ENCODE measurements at regions of chr6 and their contacts with region 1.

Region 1: GRCh38 chr6:107866606-107867301 is 42.6 kb upstream of the SCML4 start:
- DNase-seq: peak; percentile 37
- ATAC-seq: peak; percentile 80
- H3K4me3 Mint-ChIP-seq: no peak overlapping the region
- H3K27ac Mint-ChIP-seq: no peak overlapping the region
- H3K4me1 Mint-ChIP-seq: peaks cover 21% of the 10 kb centered on the region
- H3K27me3 Mint-ChIP-seq: no peaks in the 10 kb centered on the region
- CTCF ChIP-seq: peak; percentile 73

Region 2: DNA sequence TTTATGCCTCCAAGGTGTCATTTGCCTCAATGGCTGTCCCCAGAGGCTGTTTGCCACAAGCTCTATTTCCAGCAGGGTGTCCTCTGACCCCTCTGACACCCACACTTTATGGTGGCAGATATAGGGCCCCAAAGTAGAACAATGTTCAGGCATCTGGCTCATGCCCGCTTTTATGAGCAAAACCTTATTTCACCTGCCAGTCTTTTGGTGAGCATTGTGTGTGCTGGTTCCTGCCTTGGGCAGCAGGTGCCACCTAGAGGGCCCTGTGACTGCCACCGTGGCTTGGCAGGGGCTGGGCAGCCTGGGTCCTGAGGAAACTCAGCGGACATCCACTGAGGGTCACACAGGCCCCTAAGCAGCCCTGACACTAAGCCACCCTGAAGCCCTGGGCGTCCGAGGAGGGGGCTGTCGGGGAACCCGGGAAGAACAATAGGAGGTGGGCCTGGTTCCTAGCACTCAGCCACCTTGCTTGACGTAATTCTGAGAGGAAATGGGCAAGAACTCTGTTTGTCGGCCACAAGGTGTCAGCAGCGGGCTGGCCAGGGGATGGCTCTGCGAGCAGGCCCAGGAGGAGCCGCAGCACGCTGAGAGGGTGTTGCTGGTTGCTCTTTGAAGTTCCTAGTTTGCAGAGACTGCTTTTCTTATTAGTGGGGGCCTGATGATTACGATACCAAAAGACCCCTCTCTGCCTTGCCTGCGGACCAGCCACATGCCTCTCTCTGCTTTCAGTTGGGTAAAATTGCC is 191.6 kb before region 1 on chr6:
- CTCF ChIA-PET with region 1: interaction called, 55 read pairs
- POLR2A ChIA-PET with region 1: no interaction called
- intact Hi-C with region 1: loop called (anchors 1 kb)
- DNase-seq: peak; percentile 89
- ATAC-seq: peak; percentile 98
- H3K4me3 Mint-ChIP-seq: peak overlapping the region; percentile 53
- H3K27ac Mint-ChIP-seq: peak overlapping the region; percentile 91
- H3K4me1 Mint-ChIP-seq: peaks cover 16% of the 10 kb centered on the region
- H3K27me3 Mint-ChIP-seq: no peaks in the 10 kb centered on the region
- CTCF ChIP-seq: peak; percentile 91

Region 3: DNA sequence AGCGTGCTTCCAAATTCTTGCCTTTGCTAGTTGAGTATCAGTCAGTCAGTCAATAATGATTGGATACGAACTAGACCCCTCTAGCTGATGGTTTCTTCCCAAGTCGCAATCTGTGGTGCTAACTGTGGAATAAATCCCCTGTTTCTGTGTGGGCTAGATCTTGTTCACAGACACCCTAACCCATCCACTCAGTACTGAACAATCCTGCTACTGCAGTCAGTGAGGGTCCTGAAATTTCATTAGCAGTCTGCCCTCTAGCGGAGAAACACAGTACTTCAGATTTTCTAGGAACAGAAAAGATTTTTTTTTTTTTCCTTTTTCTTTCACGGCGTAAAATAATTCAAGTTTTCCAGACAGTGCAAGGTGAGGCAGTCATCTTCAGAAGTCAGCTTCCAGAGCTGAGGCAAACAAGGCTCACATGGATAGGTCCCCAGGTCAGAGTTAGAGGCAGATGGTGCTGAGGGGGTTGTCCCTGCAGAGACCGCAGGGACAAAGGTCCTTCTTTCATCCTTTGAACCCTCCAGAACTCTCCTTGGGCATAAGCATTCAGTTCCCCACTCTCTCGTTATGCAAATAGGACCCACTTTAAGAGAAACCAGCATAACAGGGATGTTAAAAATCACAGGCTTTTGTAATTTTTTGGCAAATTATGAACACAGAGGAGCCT is 162.3 kb before region 1 on chr6:
- CTCF ChIA-PET with region 1: interaction called, 16 read pairs
- POLR2A ChIA-PET with region 1: no interaction called
- intact Hi-C with region 1: no loop called
- DNase-seq: peak; percentile 43
- ATAC-seq: peak; percentile 47
- H3K4me3 Mint-ChIP-seq: no peak overlapping the region
- H3K27ac Mint-ChIP-seq: peak overlapping the region; percentile 58
- H3K4me1 Mint-ChIP-seq: peaks cover 16% of the 10 kb centered on the region
- H3K27me3 Mint-ChIP-seq: no peaks in the 10 kb centered on the region
- CTCF ChIP-seq: peak; percentile 94

Region 4: DNA sequence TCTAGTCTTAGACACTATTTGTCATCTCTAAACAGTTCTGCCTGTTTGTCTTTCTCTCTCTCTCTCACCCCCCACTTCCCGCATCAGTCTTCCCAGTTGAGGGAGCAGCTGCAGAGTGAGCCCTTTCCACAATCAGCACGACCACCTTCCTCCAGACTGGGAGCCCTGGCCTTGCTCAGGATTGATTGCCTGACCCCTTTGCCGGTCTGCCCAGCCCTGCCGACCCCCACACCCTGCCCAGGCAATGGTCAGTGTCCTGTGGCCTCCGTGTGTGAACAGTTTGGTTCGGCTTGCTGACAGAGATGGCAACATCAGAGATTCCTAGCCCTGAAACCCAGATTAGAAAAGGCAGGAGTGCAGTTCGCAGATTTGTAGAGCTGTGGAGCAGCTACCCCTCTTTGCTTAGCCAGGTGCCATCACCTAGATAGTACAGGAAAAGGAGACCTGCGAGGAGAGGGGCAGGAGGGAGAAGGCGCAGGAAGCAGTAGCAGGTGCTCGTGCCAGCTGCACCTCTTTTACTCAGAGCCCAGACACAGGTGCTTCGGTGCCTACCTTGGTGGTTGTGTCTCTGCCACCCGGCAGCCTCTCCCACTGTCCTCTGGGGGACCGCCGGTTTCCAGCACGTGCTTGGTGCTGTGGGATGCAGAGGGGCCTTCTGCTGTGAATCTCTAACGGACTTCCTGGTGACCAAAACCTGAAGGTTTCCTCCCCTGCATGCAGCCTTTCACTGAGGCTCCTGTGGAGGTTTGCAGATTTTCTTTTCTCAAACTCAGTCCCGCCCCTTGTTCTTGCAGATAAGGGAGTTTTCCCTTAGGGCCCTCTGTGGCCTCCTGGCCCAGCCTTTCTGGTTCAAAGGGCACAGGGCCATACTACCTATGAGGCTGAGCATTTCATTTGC is 135.1 kb before region 1 on chr6:
- CTCF ChIA-PET with region 1: interaction called, 20 read pairs
- POLR2A ChIA-PET with region 1: no interaction called
- intact Hi-C with region 1: loop called (anchors 5 kb)
- DNase-seq: peak; percentile 50
- ATAC-seq: peak; percentile 51
- H3K4me3 Mint-ChIP-seq: peak overlapping the region; percentile 89
- H3K27ac Mint-ChIP-seq: peak overlapping the region; percentile 90
- H3K4me1 Mint-ChIP-seq: peaks cover 70% of the 10 kb centered on the region
- H3K27me3 Mint-ChIP-seq: no peaks in the 10 kb centered on the region
- CTCF ChIP-seq: no peak

Region 5: DNA sequence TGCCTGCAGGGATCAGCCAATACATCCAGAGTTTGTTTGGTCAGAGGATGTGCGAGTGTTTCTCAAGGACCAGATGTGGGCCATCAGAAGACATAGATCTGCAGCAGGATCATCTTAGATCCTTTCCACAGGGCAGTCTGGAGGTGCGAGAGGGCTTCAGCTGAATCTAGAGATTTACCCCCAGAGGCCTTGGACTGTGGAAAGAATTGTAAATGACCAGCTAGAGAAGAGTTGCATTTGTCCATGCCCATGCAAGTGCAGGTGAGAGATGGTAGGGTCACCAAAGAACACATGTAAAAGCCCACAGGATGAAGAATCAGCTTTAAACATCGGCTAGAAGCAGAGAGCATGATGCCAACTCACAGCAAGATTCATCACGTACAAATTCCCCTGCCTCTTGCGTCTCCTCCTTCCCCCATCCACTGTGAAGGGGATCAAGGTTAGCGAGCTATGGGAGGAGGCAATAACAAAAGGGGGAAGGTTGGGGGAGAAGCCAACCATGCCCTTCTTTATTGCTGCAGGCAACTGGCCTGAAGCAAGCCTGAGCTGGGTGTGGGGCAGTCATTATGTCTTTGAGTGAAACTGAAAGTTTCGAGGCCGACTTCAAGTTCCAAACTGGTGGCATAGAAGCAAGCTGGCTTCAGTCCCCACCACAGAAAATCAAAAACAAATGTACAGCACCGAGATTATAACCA is 126.1 kb before region 1 on chr6:
- CTCF ChIA-PET with region 1: interaction called, 12 read pairs
- POLR2A ChIA-PET with region 1: no interaction called
- intact Hi-C with region 1: no loop called
- DNase-seq: peak; percentile 61
- ATAC-seq: peak; percentile 66
- H3K4me3 Mint-ChIP-seq: peak overlapping the region; percentile 75
- H3K27ac Mint-ChIP-seq: peak overlapping the region; percentile 92
- H3K4me1 Mint-ChIP-seq: peaks cover 60% of the 10 kb centered on the region
- H3K27me3 Mint-ChIP-seq: no peaks in the 10 kb centered on the region
- CTCF ChIP-seq: no peak

Region 6: GRCh38 chr6:108052706-108053105 is 186.0 kb after region 1 on chr6:
- CTCF ChIA-PET with region 1: interaction called, 10 read pairs
- POLR2A ChIA-PET with region 1: no interaction called
- intact Hi-C with region 1: no loop called
- DNase-seq: no peak
- ATAC-seq: no peak
- H3K4me3 Mint-ChIP-seq: no peak overlapping the region
- H3K27ac Mint-ChIP-seq: no peak overlapping the region
- H3K4me1 Mint-ChIP-seq: no peaks in the 10 kb centered on the region
- H3K27me3 Mint-ChIP-seq: no peaks in the 10 kb centered on the region
- CTCF ChIP-seq: no peak

Measured in activated CD8-positive, alpha-beta T cell treated with anti-CD3 and anti-CD28 coated beads for 36 hours (primary cell).